ENCODE measurements at regions of chr16 and their contacts with region 1.

Region 1: GRCh38 chr16:69799611-69800031 is 37.5 kb downstream of the WWP2 start:
- DNase-seq: no peak
- H3K4me3 ChIP-seq: no peak overlapping the region
- H3K27ac ChIP-seq: no peak overlapping the region
- H3K4me1 ChIP-seq: no peaks in the 10 kb centered on the region
- H3K27me3 ChIP-seq: no peaks in the 10 kb centered on the region

Region 2: GRCh38 chr16:69924777-69925191 is 125.2 kb after region 1 on chr16:
- in situ Hi-C with region 1: loop called (anchors 5 kb)
- DNase-seq: peak; percentile 95
- H3K4me3 ChIP-seq: peak overlapping the region; percentile 67
- H3K27ac ChIP-seq: peak overlapping the region; percentile 90
- H3K4me1 ChIP-seq: peaks cover 36% of the 10 kb centered on the region
- H3K27me3 ChIP-seq: no peaks in the 10 kb centered on the region

Measured in GM23248 (cell line).